Right lobe of liver (tissue), 6 donors: ENCODE measurements at regions of chr10 and their contacts with region 1.

Region 1: DNA sequence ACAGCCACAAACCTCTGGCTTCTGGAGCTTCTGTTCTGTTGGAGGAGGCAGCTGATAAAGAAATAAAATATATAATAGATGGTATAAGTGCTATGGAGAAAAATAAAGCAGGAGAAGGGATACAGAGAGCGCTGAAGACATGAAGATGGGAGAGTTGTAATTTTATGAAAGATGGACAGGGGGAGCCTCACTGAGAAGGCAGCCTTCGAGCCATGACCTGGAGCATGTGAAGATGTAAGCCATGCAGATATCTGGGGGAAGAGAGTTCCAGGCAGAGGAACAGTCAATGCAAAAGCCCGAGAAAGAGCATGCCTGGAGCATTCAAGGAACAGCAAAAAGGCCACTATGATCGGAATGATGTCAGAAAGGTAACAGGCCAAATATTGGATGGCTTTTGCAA is 187.5 kb downstream of the KIAA1217 start:
- DNase-seq: no peak
- ATAC-seq: peak; percentile 54 to 66 (median 60)
- H3K4me3 ChIP-seq: no peak overlapping the region
- H3K27ac ChIP-seq: no peak overlapping the region
- H3K4me1 ChIP-seq: no peaks in the 10 kb centered on the region
- H3K27me3 ChIP-seq: no peaks in the 10 kb centered on the region
- CTCF ChIP-seq: peak; percentile 15 to 40 (median 30)
- POLR2A ChIP-seq: no peak

Region 2: DNA sequence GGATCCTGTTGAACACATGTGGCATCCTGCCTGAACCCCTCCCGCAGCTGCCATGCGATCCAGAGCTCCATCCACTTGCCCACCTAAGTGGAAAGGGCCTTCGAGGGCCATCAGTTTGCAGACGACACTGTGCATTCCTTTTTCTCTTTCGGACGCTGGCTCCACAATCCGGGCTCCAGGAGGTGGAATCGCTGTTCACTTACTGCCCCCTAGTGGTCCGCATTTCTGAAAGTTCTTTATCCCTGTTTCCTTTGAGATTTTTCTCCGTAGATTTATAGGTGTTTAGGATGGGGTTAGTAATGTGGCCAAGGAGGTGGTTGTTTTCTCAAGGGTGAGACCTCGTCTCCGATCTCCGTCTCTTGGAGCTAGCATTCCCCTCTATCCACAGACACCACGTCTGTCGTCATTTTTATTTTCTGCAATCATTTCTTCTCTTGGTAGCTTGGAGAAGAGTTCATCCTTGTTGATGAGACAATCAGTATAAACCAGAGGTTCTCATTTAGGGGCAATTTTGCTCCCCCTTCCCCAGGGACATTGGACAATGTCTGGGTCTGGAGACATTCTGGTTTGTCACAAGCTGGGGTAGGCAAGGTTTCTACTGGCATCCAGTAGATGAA is 122.7 kb after region 1 on chr10:
- intact Hi-C with region 1: loop called in 1 of 2 experiments (anchors 10 kb)
- DNase-seq: peak in 2 of 3 donors; percentile 29 to 66
- ATAC-seq: peak; percentile 75 to 76 (median 76)
- H3K4me3 ChIP-seq: no peak overlapping the region
- H3K27ac ChIP-seq: no peak overlapping the region
- H3K4me1 ChIP-seq: peaks cover 0 to 12% (median 3%) of the 10 kb centered on the region in 4 donors
- H3K27me3 ChIP-seq: no peaks in the 10 kb centered on the region
- CTCF ChIP-seq: peak; percentile 52 to 63 (median 58)
- POLR2A ChIP-seq: no peak